ENCODE measurements at regions of chr1 and their contacts with region 1.

Region 1: DNA sequence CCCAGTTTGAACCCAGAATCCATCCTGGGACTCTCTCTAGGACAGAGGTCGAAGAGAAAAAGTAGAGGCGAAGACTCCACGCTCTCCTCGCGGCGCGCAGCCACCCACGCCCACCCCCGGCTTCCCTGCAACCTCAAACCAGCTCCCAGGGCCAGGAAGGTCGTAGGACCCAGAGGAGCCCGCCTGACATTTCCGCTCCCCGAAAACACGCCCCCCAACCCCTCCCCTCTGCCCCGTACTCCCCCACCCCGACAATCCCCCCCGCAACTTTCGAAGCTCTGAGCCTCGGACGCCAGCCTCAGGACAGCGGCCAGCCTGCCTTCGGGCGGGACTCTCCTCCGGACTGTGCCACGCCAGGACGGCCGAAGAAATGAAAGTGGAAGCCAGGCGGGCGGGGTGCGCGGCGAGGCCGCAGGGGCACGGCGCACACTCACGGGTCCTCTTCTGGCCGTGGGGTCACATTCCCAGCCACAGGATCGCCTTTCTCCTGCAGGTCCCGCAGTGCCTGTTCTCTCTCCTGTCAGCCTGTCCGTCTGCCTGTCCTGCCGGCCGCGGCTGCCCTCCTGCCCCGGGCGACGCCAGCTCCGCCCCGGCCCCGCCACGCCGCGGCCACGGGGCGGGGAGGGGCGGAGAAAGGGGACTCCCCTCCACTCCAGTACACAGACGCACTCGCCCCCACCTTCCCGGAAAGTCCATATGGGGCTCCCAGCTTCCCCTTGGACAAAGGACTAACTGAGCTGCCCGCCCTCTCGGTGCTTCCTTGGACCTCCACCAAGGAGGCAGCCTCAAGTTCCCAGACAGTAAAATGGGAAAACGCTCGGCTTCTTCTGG is at the start of gene MOB3C:
- DNase-seq: peak; percentile 83
- H3K4me3 Mint-ChIP-seq: peak within 1 kb of the TSS; percentile 91
- H3K27ac Mint-ChIP-seq: peak within 1 kb of the TSS; percentile 86
- H3K4me1 Mint-ChIP-seq: peaks cover 56% of the 10 kb centered on the region
- H3K27me3 Mint-ChIP-seq: peaks cover 31% of the 10 kb centered on the region

Region 2: DNA sequence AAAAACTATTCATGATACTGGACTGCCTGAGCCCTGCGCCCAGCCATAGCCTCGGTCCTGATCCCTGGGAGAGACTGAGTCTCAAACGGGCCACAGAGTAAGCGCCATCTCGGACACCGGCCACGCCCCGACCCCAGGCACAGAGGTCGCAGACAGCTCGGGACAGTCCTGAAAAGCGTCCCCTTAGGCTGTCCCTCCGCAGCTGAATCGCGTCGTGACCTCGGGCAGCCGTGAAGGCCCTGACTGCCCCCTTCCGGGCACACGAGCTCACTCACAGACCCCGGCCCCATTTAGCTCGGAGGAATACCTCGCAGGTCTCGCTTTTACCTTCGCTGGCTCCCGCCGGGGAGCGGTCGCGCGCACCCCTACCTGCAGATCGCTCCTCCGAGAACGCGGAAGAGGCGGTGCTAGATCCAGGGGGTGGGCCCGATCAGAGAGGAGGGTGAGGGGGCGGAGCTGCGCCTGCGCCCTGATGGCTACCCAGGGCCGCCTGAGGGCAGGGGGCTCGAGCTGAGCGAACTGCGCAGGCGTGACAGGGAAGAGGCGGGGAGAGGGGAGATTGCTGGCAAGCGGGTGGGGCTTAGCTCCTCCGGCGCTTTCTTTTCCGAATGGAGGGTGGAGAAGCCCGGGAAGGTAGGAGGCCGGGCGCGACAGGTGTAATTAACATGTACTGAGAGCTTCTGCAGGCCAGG is 12.5 kb before region 1 on chr1 and contains the start of gene MKNK1:
- CTCF ChIA-PET with region 1: interaction called, 22 read pairs
- DNase-seq: peak; percentile 99
- H3K4me3 Mint-ChIP-seq: peak within 1 kb of the TSS; percentile 90
- H3K27ac Mint-ChIP-seq: peak within 1 kb of the TSS; percentile 86
- H3K4me1 Mint-ChIP-seq: peaks cover 70% of the 10 kb centered on the region
- H3K27me3 Mint-ChIP-seq: peaks cover 4% of the 10 kb centered on the region

Region 3: GRCh38 chr1:46798810-46799209 is 182.3 kb after region 1 on chr1 and contains the start of gene CYP4B1:
- CTCF ChIA-PET with region 1: no interaction called
- DNase-seq: no peak
- H3K4me3 Mint-ChIP-seq: no peak within 1 kb of the TSS
- H3K27ac Mint-ChIP-seq: no peak within 1 kb of the TSS
- H3K4me1 Mint-ChIP-seq: no peaks in the 10 kb centered on the region
- H3K27me3 Mint-ChIP-seq: peaks cover 11% of the 10 kb centered on the region

Measured in activated naive CD4-positive, alpha-beta T cell treated with anti-CD3 and anti-CD28 coated beads, Interleukin-2, amount 10 ng/mL, durations not matched to agents 7 days and 5 days (primary cell).